ENCODE measurements at regions of chr6 and their contacts with region 1.

Region 1: GRCh38 chr6:131615275-131615674 is 12.8 kb downstream of the MED23 start:
- DNase-seq: no peak
- ATAC-seq: no peak
- H3K4me3 ChIP-seq: no peak overlapping the region
- H3K4me3 Mint-ChIP-seq: no peak overlapping the region
- H3K27ac ChIP-seq: no peak overlapping the region
- H3K27ac Mint-ChIP-seq: no peak overlapping the region
- H3K4me1 ChIP-seq: no peaks in the 10 kb centered on the region
- H3K4me1 Mint-ChIP-seq: peaks cover 6 to 11% (median 7%) of the 10 kb centered on the region in 3 donors
- H3K27me3 ChIP-seq: no peaks in the 10 kb centered on the region
- H3K27me3 Mint-ChIP-seq: no peaks in the 10 kb centered on the region

Region 2: DNA sequence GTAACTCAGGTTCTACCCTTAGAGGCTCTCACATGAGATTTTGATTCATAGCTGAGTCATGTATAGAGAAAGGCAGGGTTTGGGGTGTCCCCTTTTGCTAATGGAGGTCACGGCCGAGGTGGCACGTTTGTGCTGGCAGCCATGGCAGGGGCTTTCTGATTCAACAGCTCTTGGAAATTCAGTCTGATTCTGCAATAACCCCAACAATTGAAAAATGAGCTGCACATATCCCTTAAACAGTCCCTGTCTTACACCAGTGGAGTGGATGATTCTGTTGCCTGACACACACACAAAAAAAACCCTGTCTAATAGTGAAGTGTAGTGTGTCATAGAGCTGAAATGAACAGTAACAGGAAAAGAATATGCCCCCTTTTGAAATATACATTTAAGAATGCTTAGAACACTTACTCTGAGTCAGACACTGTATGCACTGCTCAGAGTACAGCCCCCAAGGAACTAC is 82.7 kb before region 1 on chr6:
- CTCF ChIA-PET with region 1: no interaction called
- POLR2A ChIA-PET with region 1: no interaction called
- DNase-seq: peak in 1 of 35 experiments; percentile 14
- ATAC-seq: peak in 3 of 4 experiments; percentile 34 to 61 (median 46)
- H3K4me3 ChIP-seq: no peak overlapping the region
- H3K4me3 Mint-ChIP-seq: peak overlapping the region in 1 of 3 donors; percentile 9
- H3K27ac ChIP-seq: no peak overlapping the region
- H3K27ac Mint-ChIP-seq: peak overlapping the region; percentile 85 to 94
- H3K4me1 ChIP-seq: peaks cover 10 to 19% of the 10 kb centered on the region in 2 experiments
- H3K4me1 Mint-ChIP-seq: peaks cover 55 to 61% (median 56%) of the 10 kb centered on the region in 3 donors
- H3K27me3 ChIP-seq: no peaks in the 10 kb centered on the region
- H3K27me3 Mint-ChIP-seq: no peaks in the 10 kb centered on the region

Region 3: GRCh38 chr6:131627724-131628682 is 12.7 kb after region 1 on chr6 and contains the start of gene MED23:
- CTCF ChIA-PET with region 1: interaction called, 6 to 17 read pairs
- POLR2A ChIA-PET with region 1: interaction called, 3 read pairs
- DNase-seq: peak; percentile 81 to 98 (median 91)
- ATAC-seq: peak; percentile 93 to 98 (median 96)
- H3K4me3 ChIP-seq: peak within 1 kb of the TSS; percentile 84 to 92
- H3K4me3 Mint-ChIP-seq: peak within 1 kb of the TSS; percentile 94 to 99 (median 98)
- H3K27ac ChIP-seq: peak within 1 kb of the TSS; percentile 58
- H3K27ac Mint-ChIP-seq: peak within 1 kb of the TSS; percentile 95 to 96
- H3K4me1 ChIP-seq: peaks cover 6 to 15% of the 10 kb centered on the region in 2 experiments
- H3K4me1 Mint-ChIP-seq: peaks cover 38 to 44% (median 39%) of the 10 kb centered on the region in 3 donors
- H3K27me3 ChIP-seq: no peaks in the 10 kb centered on the region
- H3K27me3 Mint-ChIP-seq: no peaks in the 10 kb centered on the region
- total RNA-seq, gene MED23: 45.6 to 64.5 (median 46.6) TPM